ENCODE measurements at regions of chr20 and their contacts with region 1.

Region 1: GRCh38 chr20:62921119-62921687 is 5.1 kb downstream of the DIDO1 start:
- DNase-seq: peak; percentile 82
- H3K4me3 Mint-ChIP-seq: peak overlapping the region; percentile 64
- H3K27ac Mint-ChIP-seq: peak overlapping the region; percentile 83
- H3K4me1 Mint-ChIP-seq: peaks cover 74% of the 10 kb centered on the region
- H3K27me3 Mint-ChIP-seq: no peaks in the 10 kb centered on the region

Region 2: GRCh38 chr20:62900052-62900691 is 21.0 kb before region 1 on chr20:
- CTCF ChIA-PET with region 1: interaction called, 127 read pairs
- POLR2A ChIA-PET with region 1: interaction called, 14 read pairs
- intact Hi-C with region 1: loop called (anchors 1 kb)
- DNase-seq: peak; percentile 83
- H3K4me3 Mint-ChIP-seq: peak overlapping the region; percentile 45
- H3K27ac Mint-ChIP-seq: peak overlapping the region; percentile 81
- H3K4me1 Mint-ChIP-seq: peaks cover 41% of the 10 kb centered on the region
- H3K27me3 Mint-ChIP-seq: no peaks in the 10 kb centered on the region

Region 3: GRCh38 chr20:62907384-62908317 is 13.6 kb before region 1 on chr20:
- CTCF ChIA-PET with region 1: interaction called, 127 read pairs
- POLR2A ChIA-PET with region 1: no interaction called
- intact Hi-C with region 1: no loop called
- DNase-seq: peak; percentile 47
- H3K4me3 Mint-ChIP-seq: no peak overlapping the region
- H3K27ac Mint-ChIP-seq: peak overlapping the region; percentile 67
- H3K4me1 Mint-ChIP-seq: peaks cover 17% of the 10 kb centered on the region
- H3K27me3 Mint-ChIP-seq: no peaks in the 10 kb centered on the region

Measured in activated CD4-positive, alpha-beta memory T cell treated with anti-CD3 and anti-CD28 coated beads for 36 hours (primary cell).